ENCODE measurements at regions of chr19 and their contacts with region 1.

Region 1: DNA sequence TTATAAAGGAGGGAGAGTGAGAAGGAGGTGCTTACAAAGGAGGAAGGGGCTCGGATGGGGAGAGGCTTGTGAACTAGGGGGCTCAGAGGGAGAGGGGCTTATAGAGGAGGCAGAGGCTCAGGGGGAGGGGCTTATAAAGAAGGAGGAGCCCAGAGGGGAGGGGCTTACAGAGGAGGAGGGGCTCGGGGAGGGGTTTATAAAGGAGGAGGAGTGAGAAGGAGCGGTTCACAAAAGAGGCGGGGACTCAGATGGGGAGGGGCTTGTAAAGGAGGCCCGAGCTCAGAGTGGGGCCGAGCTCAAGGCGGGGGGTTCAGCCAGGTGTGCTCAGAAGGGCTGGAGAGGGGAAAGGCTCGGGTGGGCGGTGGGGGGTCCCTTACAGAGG is 500 bp downstream of the SMIM24 start:
- DNase-seq: no peak
- ATAC-seq: peak; percentile 71
- H3K4me3 ChIP-seq: no peak overlapping the region
- H3K27ac ChIP-seq: no peak overlapping the region
- H3K4me1 ChIP-seq: peaks cover 0 to 7% of the 10 kb centered on the region in 2 experiments; a peak in 2 of 4 replicates
- H3K27me3 ChIP-seq: peaks cover 4% of the 10 kb centered on the region; the same call in 1 of the 2 replicates
- CTCF ChIP-seq: no peak
- POLR2A ChIP-seq: no peak
- RAD21 ChIP-seq: no peak

Region 2: DNA sequence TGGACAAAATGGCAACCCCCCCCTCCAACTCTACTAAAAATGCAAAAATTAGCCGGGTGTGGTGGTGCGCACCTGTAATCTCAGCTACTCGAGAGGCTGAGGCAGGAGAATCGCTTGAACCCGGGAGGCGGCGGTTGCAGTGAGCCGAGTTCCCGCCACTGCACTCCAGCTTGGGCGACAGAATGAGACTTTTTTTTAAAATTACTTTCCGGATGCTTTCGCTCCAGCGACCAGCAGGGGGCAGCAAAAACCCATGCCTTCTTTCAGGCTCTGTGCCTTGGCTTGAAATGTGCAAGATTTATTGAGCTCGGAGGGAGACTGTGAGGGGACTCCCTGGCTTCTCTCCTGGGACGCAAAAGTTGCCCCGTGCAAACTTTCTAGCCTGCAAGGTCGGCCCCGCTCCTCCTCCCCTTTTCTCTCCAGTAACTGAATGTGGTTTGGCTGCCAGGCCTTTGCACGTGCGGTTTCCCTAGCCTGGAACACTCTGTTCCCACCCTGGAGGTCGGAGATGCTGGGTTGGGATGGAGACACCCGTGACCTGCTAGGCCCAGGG is 174.9 kb before region 1 on chr19:
- CTCF ChIA-PET with region 1: interaction called, 23 read pairs
- POLR2A ChIA-PET with region 1: interaction called, 3 read pairs
- RAD21 ChIA-PET with region 1: interaction called, 4 read pairs
- intact Hi-C with region 1: loop called (anchors 1 kb)
- DNase-seq: peak; percentile 56
- ATAC-seq: peak; percentile 52
- H3K4me3 ChIP-seq: 0 out of 4 replicates have a peak overlapping the region, but pooled peaks of 1 of the 2 experiments have one; percentile 19
- H3K27ac ChIP-seq: no peak overlapping the region
- H3K4me1 ChIP-seq: peaks cover 0 to 3% of the 10 kb centered on the region in 2 experiments; a peak in 1 of 4 replicates
- H3K27me3 ChIP-seq: peaks cover 5% of the 10 kb centered on the region; the same call in 1 of the 2 replicates
- CTCF ChIP-seq: peak; percentile 75 to 79 (median 77)
- POLR2A ChIP-seq: no peak
- RAD21 ChIP-seq: peak; percentile 82

Region 3: DNA sequence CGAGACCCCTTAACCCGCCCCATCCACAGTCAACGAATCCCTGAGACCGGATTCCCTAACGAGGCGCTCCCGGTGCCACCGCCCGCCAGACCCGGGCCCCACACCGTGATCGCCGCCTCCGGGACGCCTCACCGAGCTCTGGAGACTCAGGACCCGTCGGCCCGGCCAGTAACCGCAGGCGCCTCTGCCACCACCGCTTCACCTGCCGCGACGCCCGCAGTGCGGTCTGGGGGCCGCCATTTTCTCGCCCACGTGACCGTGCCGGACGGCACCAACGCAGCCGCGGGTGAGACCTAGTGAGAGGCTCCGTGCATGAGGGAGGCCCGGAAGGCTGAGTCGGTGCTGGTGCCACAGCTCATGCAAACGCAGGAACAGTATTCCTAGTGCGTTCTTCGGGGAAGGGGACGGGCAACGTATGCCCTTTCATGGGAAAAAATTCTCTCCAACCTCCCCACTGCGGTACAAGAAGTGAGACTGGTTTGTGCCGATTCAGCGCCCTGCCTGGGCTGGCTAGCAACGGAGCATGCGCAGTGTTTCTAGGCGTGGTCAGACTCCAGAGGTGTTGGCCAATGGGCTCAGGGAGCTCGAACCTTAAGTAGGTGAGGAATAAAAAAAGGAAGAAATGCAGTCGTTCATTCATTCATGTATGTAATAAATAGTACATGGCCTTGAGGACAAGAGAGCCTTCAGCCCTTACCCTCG is 20.8 kb after region 1 on chr19 and contains the start of gene DOHH:
- CTCF ChIA-PET with region 1: interaction called, 17 read pairs
- POLR2A ChIA-PET with region 1: no interaction called
- RAD21 ChIA-PET with region 1: no interaction called
- intact Hi-C with region 1: no loop called
- DNase-seq: peak; percentile 98
- ATAC-seq: peak; percentile 87
- H3K4me3 ChIP-seq: peak within 1 kb of the TSS; percentile 81 to 98
- H3K27ac ChIP-seq: peak within 1 kb of the TSS; percentile 78
- H3K4me1 ChIP-seq: peaks cover 15 to 24% of the 10 kb centered on the region in 2 experiments; a peak in 3 of 4 replicates
- H3K27me3 ChIP-seq: no peaks in the 10 kb centered on the region
- CTCF ChIP-seq: no peak
- POLR2A ChIP-seq: peak; percentile 78
- RAD21 ChIP-seq: no peak
- total RNA-seq, gene DOHH: 20.9 TPM

Measured in HCT116 (cell line).